AG04449 (cell line): ENCODE measurements at regions of chr22 and their contacts with region 1.

Region 1: GRCh38 chr22:18077639-18078328 is at the start of gene PEX26:
- DNase-seq: no peak
- H3K4me3 ChIP-seq: peak within 1 kb of the TSS; percentile 90
- CTCF ChIP-seq: no peak

Region 2: GRCh38 chr22:17754233-17754925 is 323.4 kb before region 1 on chr22:
- CTCF ChIA-PET with region 1: interaction called, 11 read pairs
- POLR2A ChIA-PET with region 1: no interaction called
- DNase-seq: no peak
- H3K4me3 ChIP-seq: no peak overlapping the region
- CTCF ChIP-seq: peak; percentile 32

Region 3: DNA sequence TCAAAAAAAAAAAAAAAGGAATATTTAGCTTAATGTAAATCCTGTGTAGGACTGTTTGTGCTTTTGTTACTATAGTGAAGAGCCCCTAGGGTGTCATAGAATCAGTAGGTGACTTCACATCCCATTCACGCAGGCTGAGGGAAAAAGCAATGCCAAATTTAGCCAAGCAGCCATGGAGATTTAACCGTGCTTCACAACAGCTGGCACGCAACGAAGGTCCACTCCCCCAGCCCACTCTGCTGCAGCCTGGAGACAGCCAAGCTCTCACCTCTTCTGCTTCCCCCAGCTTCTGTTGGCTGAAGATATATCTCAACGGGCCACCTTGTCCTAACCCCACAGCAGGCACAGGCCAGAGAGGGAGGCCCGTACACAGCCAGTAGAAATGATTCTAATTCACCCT is 224.7 kb before region 1 on chr22:
- CTCF ChIA-PET with region 1: interaction called, 11 read pairs
- POLR2A ChIA-PET with region 1: no interaction called
- DNase-seq: no peak
- H3K4me3 ChIP-seq: no peak overlapping the region
- CTCF ChIP-seq: no peak

Region 4: DNA sequence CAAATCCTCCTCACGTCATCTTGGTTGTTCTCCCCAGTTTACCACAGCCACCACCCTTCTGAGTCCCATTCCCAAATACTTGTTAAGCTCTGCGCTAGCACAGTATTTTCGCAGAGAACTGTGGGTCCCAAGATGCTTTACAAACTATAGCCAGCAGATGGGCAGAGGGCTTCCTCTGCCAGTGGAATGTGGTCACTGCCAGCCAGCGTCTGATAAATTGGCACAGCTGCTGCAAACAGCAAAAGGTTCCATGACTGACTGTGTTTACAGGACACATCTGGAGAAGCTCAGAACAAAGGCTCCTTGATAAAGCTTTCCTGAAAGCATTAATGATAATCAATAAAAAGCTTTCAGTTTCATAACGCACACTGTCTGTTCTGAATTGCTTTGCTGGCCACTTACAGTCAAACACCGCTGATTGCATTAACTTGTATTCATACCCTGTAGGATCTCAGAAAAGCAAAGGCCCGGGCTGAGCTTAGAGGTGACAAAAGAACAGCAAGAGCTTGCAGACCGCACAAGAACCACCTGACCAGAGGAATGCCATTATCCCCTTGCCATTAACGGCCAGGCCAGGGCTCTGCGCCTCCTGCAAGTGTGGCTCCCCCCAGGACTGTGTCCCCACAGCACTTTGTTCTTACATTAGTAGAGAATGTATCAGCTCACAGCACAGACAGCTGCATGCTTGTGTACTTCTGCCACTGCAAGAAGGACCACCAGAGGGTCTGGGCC is 174.1 kb before region 1 on chr22:
- CTCF ChIA-PET with region 1: interaction called, 84 read pairs
- POLR2A ChIA-PET with region 1: no interaction called
- DNase-seq: no peak
- H3K4me3 ChIP-seq: no peak overlapping the region
- CTCF ChIP-seq: no peak

Region 5: DNA sequence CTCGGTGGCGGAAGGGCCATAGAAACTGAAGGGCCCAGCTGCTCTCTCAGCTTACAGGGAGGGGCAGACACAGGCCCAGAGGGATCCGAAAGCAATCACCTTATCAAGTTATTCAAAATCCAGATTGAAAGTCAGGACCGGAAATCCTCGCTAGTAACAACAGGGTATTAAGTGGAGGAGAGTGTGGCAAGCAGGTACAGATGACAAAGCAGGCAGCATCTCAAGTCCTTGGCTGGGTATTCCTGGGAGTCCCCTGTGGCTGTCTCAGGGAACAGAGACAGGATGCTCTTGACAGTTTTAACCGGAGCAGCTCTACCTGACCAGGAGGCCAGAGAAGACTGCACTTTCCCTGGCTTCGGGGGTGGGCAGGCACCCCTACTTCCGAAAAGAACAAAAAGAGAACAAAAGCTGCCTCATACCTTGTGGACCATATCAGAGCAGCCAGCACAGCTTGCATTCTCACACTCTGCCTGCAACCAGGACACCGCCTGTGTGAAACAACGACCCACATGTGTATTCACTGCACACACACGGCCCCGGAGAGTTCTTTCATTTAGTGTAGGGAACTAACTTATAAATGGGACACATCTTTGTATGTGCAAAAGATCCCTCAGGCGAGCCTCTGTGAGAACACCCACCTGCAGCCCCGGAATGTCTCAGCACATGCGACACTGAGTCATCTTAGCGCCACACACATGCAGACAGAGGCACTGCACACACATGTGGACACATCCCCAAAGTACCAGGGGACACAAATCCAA is 131.7 kb before region 1 on chr22:
- CTCF ChIA-PET with region 1: interaction called, 14 read pairs
- POLR2A ChIA-PET with region 1: no interaction called
- DNase-seq: no peak
- H3K4me3 ChIP-seq: no peak overlapping the region
- CTCF ChIP-seq: no peak

Region 6: DNA sequence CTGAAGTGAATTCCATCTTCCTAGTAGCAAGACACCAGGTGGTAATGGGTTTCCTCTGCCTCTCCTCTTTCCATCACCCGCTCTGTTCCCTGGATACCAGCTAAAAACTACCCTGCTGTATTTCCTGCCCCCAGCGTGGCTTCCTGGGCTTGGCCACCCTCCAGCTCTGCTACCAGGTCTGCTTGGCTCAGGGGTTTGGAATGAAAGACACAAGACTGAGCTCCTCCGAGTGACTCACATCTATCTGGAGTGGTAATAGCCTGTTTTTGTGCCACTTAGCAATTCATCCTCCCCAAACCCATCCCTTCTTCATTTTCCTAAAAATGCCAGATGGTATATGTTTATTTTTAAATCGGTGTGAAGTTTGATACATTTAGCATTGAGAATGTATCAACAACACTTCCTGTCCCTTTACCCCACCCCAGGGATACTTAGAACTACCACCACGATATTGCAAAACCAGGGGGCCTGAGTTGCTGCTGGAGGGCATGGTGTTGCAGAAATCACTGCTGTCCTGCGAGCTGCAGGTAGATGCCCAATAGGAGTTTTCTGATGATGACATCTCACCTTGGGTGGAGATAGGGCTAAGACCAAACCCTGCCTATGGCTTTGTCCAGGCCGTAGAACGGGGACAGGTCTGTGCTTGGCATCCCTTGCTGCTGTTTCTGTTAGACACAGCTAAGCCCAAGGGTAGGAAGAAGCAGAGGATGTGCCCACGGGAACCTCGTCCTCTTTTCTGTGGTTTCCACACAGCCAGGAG is 45.9 kb before region 1 on chr22:
- CTCF ChIA-PET with region 1: interaction called, 29 read pairs
- POLR2A ChIA-PET with region 1: interaction called, 4 read pairs
- DNase-seq: peak; percentile 92
- H3K4me3 ChIP-seq: no peak overlapping the region
- CTCF ChIP-seq: no peak